ENCODE measurements at regions of chr15 and their contacts with region 1.

Region 1: GRCh38 chr15:98647774-98648653 is at the start of gene IGF1R:
- DNase-seq: peak; percentile 91
- ATAC-seq: peak; percentile 56
- H3K4me3 Mint-ChIP-seq: peak within 1 kb of the TSS; percentile 89
- H3K27ac Mint-ChIP-seq: peak within 1 kb of the TSS; percentile 91
- H3K4me1 Mint-ChIP-seq: peaks cover 21% of the 10 kb centered on the region
- H3K27me3 Mint-ChIP-seq: peaks cover 17% of the 10 kb centered on the region
- total RNA-seq, gene IGF1R: 26.3 to 43.7 TPM

Region 2: DNA sequence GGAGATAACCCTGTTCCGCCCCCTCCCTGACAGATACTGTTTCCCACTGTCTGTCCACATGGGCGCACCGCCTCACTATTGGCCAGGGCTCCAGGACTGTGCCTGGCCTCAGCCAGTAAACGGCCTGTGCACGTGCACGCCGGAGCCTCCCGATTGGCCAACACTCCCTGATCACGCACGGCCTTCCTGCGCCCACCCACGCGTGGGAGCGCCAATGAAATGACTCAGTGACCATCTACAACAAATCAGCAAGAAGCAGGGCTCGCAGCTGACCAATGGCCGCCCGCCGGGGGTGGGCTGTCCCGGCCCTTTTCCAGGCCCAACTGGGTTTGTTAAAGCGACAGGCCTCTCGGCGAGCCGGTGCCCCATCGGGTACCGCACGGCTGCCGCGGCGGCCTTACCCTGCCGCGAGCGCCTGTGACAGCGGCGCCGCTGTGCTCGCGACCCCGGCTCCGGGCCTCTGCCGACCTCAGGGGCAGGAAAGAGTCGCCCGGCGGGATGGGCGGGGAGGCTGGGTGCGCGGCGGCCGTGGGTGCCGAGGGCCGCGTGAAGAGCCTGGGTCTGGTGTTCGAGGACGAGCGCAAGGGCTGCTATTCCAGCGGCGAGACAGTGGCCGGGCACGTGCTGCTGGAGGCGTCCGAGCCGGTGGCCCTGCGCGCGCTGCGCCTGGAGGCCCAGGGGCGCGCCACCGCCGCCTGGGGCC is 687.5 kb before region 1 on chr15 and contains the start of gene ARRDC4:
- CTCF ChIA-PET with region 1: no interaction called
- POLR2A ChIA-PET with region 1: no interaction called
- intact Hi-C with region 1: loop called in 1 of 2 experiments (anchors 2 kb)
- DNase-seq: peak; percentile 98
- ATAC-seq: peak; percentile 99
- H3K4me3 Mint-ChIP-seq: peak within 1 kb of the TSS; percentile 70
- H3K27ac Mint-ChIP-seq: peak within 1 kb of the TSS; percentile 70
- H3K4me1 Mint-ChIP-seq: peaks cover 20% of the 10 kb centered on the region
- H3K27me3 Mint-ChIP-seq: no peaks in the 10 kb centered on the region
- total RNA-seq, gene ARRDC4: 0.88 to 1.1 TPM

Region 3: GRCh38 chr15:98548154-98548971 is 99.7 kb before region 1 on chr15:
- CTCF ChIA-PET with region 1: interaction called, 9 read pairs
- POLR2A ChIA-PET with region 1: interaction called, 5 read pairs
- intact Hi-C with region 1: loop called (anchors 1 to 2 kb)
- DNase-seq: peak; percentile 79
- ATAC-seq: peak; percentile 96
- H3K4me3 Mint-ChIP-seq: peak overlapping the region; percentile 77
- H3K27ac Mint-ChIP-seq: peak overlapping the region; percentile 96
- H3K4me1 Mint-ChIP-seq: peaks cover 17% of the 10 kb centered on the region
- H3K27me3 Mint-ChIP-seq: peaks cover 41% of the 10 kb centered on the region

Region 4: GRCh38 chr15:98635848-98636247 is 12.2 kb before region 1 on chr15:
- CTCF ChIA-PET with region 1: interaction called, 20 read pairs
- POLR2A ChIA-PET with region 1: interaction called, 4 read pairs
- intact Hi-C with region 1: no loop called
- DNase-seq: no peak
- ATAC-seq: no peak
- H3K4me3 Mint-ChIP-seq: no peak overlapping the region
- H3K27ac Mint-ChIP-seq: no peak overlapping the region
- H3K4me1 Mint-ChIP-seq: peaks cover 9% of the 10 kb centered on the region
- H3K27me3 Mint-ChIP-seq: no peaks in the 10 kb centered on the region

Region 5: DNA sequence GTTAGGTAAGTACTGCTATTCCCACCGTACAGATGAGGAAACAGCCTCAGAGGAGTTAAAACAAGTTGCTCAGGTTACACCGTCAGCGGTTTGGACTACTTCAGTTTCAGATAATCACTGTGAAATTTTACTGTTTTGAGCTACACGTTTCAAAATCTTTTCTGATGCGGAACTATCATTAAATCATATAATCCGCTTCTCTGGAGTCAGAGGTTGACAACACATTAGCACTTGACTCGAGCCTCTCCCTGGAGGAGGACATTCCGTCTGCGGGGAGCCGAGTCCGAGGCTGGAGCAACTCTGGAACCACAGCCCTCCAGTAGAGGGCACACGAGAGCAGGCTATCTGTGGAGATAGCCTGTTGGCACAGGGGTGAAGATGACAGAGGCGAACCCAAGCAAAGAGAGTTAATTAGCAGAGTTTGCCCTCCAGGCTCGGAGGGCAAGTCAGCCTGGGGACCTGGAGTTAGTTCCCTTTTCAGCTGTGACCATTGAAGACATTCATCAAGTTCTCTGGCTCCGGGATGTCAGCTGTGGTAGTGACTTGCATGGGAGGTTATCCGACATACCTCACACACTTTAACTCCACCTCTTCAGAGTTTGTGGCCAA is 131.6 kb after region 1 on chr15:
- CTCF ChIA-PET with region 1: interaction called, 4 read pairs
- POLR2A ChIA-PET with region 1: no interaction called
- intact Hi-C with region 1: loop called in 1 of 2 experiments (anchors 1 kb)
- DNase-seq: peak; percentile 87
- ATAC-seq: peak; percentile 90
- H3K4me3 Mint-ChIP-seq: no peak overlapping the region
- H3K27ac Mint-ChIP-seq: no peak overlapping the region
- H3K4me1 Mint-ChIP-seq: peaks cover 43% of the 10 kb centered on the region
- H3K27me3 Mint-ChIP-seq: no peaks in the 10 kb centered on the region

Region 6: DNA sequence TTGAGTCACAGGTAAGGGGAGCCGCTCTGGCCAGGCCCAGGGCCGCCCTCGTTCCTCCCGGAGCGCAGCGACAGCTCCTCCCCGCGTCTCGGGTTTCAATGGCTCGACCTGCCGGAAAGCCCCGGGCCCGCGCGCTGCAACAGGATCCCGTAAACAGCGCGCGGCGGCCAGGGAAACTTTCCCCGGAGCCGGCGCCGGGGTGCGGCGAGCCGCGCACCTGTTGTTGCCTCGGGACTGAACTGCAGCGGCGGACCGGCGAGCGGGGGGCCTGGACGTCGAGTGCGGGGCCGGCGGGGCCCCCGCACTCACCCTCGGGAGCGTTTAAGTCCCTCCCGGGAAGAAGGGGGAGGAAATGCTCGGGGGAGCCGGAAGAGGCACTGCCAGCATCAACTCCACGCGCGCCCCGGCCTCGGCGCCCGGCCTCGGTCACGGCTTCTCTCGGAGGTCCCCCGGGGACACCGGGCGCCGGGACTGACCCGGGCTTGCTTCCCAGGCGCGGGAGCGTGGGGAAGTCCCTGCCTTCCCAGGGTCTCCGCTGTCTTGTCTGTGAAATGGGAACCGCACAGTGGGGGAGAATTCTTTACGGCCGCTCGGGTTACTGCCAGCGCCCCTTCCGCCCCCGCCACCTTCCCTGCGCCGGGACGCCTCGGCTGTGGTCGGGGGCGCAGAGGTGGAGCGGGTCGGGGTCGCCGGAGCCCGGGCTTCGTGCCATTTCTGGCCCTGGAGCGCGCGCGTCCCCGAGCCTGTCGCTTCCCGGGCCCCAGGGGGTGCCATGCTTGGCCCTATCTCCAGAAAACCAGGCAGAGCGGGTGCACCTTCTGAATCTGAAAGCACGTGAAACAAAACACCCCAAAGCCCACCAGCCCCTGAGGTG is 367.0 kb after region 1 on chr15:
- CTCF ChIA-PET with region 1: no interaction called
- POLR2A ChIA-PET with region 1: no interaction called
- intact Hi-C with region 1: loop called in 1 of 2 experiments (anchors 1 kb)
- DNase-seq: peak; percentile 84
- ATAC-seq: peak; percentile 95
- H3K4me3 Mint-ChIP-seq: peak overlapping the region; percentile 61
- H3K27ac Mint-ChIP-seq: no peak overlapping the region
- H3K4me1 Mint-ChIP-seq: peaks cover 10% of the 10 kb centered on the region
- H3K27me3 Mint-ChIP-seq: peaks cover 2% of the 10 kb centered on the region

Region 7: DNA sequence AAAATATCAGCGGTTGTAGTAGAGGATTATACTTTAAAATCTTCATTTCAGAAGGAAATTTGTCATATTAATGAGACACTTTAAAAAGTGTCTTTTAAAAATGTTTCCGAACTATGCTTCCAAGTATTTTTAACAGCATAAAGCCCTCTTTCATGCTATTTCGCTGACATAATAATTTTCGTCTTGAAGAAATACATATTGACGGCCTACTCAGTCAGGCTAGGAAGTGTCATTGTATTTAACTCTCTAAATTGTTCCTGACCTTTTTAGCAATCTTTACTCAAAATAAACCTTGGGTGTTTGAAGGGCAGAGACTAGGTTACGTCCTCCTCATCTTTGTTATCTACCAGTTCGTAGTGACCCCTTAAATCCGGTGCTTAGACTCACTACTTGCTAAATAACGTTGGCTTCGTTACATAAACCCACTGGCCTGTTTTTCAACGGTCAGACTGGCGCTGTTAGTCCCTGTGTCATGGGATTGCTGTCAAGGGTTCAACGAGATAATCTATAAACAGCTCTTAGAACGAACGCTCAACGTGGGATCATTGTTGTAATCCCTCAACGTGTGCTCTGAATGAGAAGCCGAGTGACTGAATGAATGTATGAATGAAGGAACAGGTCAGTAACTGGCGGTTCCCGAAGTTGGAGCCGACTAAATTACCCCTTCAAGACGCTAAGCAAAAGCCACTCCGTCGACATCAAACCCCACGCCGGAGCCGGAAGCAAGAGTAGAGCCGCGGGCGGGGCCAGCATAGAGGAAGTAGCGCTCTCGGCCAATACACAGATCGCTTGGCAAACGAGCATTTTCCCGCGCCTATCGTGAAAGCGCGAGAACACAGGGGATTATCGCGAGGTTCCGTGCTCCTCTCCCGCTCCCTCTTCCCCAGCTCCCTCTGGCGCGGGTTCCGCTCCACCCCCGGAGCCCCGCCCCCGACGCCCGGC is 602.8 kb after region 1 on chr15:
- CTCF ChIA-PET with region 1: no interaction called
- POLR2A ChIA-PET with region 1: no interaction called
- intact Hi-C with region 1: loop called in 1 of 2 experiments (anchors 5 kb)
- DNase-seq: peak; percentile 98
- ATAC-seq: peak; percentile 99
- H3K4me3 Mint-ChIP-seq: no peak overlapping the region
- H3K27ac Mint-ChIP-seq: peak overlapping the region; percentile 95
- H3K4me1 Mint-ChIP-seq: peaks cover 22% of the 10 kb centered on the region
- H3K27me3 Mint-ChIP-seq: no peaks in the 10 kb centered on the region